Posterior cingulate gyrus (tissue), 11 donors: ENCODE measurements at regions of chr4 and their contacts with region 1.

Region 1: DNA sequence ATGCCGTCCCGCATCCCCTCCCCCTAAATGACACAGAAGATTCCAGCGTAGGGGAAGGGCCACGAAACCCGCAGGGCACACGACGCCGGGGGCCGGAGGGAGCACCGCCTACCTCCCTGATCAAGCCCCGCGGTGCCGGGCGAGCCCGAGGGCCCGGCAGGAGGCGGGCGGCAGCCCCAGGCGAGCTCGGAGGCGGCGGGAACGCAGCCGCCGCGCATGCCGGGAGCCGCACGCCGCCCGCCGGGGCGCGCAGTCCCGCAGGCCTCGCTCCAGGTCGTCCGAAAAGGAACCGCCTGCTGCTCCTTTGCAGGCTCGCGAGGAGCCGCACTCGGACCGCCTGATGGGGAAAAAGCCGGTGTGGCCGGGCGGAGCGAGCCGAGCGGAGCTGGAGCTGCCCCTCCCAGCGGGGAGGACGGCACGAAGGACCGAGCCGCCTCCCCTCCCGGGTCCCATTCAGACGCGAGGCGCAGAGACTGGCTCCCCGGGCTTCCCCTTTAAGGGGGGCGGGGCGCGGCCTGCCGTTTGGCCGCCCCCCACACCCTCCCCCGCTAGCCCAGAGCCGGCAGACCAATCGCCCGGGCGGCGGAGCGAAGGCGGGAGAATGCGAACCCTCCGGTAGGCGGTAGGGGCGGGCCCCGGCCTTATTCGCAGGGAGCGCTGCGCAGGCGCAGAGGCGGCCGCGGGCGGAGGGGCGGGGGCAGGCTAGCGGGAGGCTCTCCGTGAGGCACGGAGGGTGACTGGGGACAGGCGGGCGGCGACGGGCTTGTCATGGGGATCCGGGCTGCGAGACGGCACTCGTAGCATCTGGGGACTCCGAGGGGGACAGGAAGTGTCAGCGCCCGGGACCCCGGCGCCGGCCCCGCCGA is 561 bp upstream of the ING2 start:
- DNase-seq: peak; percentile 97 to 100 (median 98)

Region 2: DNA sequence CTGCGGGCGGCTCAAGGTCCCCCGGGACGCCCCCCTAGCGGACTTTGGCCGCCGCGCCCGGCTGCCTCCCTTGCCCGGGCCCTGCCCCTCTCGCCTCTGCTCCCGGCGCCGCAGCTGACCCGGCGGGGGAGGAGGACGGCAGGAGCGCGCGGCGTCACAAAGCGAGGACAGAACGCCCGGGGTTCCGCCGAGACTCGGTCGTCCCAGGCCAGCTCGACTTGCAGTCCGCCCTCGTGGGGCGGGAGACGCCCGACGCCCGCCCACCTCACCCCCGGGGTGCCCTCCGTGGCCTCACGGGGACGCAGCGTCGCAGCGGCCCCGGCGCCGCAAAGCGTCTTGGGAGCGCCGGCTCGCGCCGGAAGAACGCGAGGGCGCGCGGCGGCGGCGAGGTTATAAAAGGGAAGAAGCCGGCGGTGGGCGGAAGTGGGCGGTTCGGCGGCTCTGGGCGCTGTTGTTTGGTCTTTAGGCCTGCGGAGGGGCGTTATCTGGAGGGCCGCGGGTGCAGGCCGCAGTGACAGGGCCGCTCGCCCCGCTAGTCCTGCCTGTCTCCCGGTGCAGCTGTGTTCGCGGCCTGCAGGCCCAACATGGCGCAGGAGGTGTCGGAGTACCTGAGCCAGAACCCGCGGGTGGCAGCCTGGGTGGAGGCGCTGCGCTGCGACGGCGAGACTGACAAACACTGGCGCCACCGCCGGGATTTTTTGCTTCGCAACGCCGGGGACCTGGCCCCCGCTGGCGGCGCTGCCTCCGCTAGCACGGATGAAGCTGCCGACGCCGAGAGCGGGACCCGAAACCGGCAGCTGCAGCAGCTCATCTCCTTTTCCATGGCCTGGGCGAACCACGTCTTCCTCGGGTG is 59.9 kb before region 1 on chr4 and contains the start of gene CDKN2AIP:
- intact Hi-C with region 1: loop called (anchors 2 kb)
- DNase-seq: peak; percentile 85 to 98 (median 88)

Region 3: DNA sequence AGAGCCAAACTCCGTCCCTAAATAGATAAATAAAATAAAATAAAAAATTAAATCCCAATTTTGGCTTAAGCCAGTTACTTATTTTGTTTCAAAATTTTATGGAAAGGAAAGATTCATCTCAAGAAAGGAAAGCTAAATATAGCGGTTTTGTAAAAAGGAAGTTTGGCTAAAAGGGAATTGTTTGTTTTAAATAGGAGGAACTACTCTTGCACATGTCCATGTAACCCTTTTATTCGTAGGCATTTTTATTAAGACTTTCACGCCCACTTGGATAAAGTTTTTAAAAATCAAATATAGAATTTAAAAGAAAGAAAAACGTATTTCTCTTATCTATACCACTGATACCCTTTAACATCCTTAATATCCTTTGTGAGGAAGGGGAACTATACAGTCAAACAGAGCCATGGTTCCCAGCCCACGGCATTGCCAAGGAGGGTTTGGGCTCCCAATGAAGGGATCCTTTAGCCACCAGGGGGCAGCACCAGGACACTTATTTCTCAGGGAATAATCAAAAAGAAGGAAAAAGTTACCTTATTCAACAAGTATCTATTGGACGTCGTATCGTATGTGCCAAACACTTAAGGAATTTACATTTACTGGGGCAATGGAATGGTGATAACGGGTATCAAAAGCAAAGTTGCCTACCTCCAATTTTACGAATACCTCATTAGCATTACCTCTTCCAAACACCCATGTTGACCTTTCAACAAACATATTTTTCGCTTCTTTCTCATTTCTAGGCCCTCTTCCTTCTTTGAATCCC is 32.2 kb before region 1 on chr4:
- intact Hi-C with region 1: loop called (anchors 2 kb)
- DNase-seq: peak; percentile 56 to 96 (median 88)

Region 4: DNA sequence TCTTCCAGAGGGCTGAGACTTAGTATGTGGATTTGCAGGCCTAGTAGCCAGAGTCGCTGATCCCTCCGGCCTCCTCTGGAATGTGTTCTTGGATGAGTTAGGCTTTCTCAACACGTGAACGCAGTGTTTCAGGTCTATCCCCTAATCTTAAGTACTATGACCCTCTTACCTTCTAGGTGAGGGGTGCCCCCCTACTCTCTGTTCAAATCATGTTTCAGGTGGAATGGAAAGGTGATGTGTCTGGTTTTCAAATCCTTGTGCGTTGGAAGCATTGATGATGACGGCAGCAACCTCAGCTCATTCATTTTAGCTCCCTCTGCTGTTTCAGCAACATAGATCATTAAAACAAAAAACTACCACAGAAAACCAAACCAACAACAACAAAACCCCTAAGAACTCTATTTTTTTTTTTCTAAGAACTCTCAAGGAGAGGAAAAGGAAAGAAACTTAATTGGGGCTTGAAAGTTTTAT is 98.3 kb after region 1 on chr4:
- intact Hi-C with region 1: loop called (anchors 10 kb)
- DNase-seq: no peak

Region 5: DNA sequence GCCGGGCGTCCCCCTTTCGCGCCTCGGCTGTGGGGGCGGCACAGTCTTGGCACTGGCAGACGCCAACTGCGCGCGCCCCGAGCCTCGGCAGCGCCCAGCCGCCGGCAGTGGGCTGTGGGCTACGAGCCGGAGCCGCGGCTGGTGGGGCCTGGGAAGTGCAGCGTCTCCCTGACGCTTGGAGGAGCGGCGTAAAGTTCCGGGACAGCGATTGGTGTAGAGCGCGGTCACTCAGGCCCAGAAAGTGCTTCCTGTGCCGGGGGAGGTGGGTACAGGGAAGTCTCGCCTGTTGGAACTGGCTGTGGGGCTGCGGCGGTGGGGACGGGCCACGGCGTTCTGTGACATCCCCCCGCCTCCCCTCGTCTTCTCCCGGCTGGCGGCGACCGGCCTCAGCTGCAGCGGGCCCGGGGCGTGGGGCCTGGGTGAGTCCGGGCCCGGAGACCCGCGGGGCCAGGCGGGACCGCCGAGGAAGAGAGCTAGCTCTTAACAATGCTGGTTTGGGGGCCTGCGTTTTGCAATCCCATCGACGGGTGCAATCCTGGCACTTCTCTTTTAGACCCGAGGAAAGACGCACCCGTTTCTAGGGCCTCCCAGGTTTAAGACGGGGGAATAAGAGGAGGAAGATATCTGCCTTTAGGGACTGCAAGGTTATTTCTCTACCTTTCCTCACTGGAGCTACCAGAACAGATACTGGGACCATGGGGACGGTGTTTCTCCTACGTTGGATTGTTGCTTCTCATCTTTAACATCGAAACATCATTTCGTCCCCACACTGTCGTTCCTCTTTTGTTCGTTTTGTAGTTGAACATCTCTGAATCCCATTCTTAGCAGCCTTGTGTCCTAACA is 155.0 kb after region 1 on chr4 and contains the starts of genes RWDD4 and TRAPPC11:
- intact Hi-C with region 1: loop called (anchors 1 kb)
- DNase-seq: peak; percentile 95 to 100 (median 98)

Region 6: DNA sequence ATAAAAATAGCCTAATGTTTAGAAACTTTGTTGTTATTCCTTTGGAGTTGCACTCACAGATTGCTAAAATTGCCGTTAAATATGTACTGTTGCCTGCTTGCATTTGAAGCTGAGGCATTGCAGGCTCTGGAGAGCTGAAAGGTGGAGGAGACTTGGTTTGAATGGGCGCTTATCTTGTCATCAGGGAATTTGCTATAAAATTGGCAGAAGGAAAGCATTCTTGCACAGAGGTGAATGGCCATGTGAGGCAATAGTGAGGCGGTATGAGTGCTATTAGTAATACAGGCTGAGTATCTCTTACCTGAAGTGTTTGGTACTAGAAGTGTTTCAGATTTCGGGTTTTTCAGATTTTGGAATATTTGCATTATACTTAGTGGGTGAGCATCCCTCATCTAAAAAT is 196.1 kb after region 1 on chr4:
- intact Hi-C with region 1: no loop called
- DNase-seq: no peak